Heart right ventricle (tissue), 16 donors: ENCODE measurements at regions of chr2 and their contacts with region 1.

Region 1: DNA sequence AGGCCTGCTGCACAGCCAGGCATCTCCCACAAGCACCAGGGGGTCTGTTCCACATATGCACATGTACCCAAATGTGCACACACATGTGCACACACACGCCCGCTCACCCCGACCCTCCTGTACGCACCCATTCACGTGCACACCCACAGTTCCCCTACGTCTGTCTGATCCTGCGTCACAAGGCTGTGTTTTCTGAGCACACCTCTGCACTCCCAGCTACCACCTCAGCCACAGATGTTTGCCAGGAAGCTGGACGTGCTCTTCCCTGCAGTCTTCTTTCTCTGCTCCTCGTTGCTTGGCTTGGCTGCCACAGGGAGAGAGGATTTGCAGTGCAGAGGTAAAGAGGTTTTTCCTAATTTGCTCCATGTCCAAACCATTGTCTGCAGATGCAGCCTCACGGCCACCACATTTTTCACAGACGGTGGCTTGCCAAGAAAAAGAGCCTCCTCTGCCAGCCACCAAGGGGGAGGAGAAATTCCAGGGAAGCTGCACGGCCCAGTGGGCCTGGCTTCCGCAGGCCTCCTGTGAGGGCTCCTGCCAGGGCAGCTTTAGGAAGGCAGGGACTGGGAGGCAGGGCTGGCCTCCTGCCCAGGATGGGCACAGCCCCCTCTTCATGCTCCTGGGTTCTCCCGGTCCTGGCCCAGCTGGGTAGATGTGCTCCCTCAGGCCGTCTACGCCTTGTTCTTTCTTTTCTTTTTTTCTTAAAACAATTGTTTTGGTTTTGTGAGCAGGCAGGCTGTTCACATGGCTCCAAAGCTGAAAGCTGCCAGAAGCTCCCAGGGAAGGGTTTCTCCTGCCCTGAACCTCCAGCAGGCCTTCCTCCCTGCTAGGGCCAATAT is 29.3 kb upstream of the HS6ST1 start:
- DNase-seq: peak; percentile 73 to 77
- ATAC-seq: peak; percentile 89 to 99 (median 94)
- H3K4me3 ChIP-seq: no peak overlapping the region
- H3K27ac ChIP-seq: peak overlapping the region; percentile 0 to 80 (median 48)
- H3K4me1 ChIP-seq: peaks cover 10 to 24% (median 19%) of the 10 kb centered on the region in 9 donors
- H3K27me3 ChIP-seq: no peaks in the 10 kb centered on the region
- CTCF ChIP-seq: no peak

Region 2: DNA sequence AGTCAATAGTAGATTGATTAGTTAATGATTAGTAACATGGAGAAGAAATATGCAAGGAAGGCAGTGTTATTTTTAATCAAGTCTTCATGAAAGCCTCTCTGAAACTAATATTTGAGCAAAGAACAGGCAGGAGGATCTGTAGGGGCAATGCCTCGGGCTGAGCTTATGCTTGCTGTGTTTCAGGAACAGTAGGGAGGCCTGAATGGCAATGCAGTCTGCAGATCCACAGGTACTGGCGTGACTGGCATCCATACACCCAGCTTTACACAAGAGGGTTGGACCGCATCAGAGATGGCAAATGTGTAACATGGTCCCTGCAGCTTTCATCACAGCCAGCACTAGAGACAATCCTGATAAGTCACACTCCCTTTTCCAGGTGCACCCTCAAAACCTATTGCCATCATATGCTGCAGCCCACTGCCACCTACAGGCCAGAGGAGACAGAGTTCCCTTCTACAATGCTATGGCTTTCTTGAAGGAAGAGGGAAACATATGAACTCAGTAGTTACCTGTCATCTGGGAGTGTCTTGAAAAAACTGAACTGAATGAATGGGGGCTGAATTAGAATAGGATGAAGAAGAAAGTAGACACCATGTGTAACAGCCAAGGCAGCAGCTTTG is 1049.2 kb after region 1 on chr2:
- intact Hi-C with region 1: loop called in 1 of 10 experiments (anchors 10 kb)
- DNase-seq: peak in 1 of 2 donors; percentile 16
- ATAC-seq: peak in 2 of 8 donors; percentile 59 to 69
- H3K4me3 ChIP-seq: no peak overlapping the region
- H3K27ac ChIP-seq: no peak overlapping the region
- H3K4me1 ChIP-seq: peaks cover 0 to 6% (median 0%) of the 10 kb centered on the region in 9 donors
- H3K27me3 ChIP-seq: no peaks in the 10 kb centered on the region
- CTCF ChIP-seq: peak; percentile 33 to 67 (median 57)